ENCODE measurements at regions of chr22 and their contacts with region 1.

Region 1: DNA sequence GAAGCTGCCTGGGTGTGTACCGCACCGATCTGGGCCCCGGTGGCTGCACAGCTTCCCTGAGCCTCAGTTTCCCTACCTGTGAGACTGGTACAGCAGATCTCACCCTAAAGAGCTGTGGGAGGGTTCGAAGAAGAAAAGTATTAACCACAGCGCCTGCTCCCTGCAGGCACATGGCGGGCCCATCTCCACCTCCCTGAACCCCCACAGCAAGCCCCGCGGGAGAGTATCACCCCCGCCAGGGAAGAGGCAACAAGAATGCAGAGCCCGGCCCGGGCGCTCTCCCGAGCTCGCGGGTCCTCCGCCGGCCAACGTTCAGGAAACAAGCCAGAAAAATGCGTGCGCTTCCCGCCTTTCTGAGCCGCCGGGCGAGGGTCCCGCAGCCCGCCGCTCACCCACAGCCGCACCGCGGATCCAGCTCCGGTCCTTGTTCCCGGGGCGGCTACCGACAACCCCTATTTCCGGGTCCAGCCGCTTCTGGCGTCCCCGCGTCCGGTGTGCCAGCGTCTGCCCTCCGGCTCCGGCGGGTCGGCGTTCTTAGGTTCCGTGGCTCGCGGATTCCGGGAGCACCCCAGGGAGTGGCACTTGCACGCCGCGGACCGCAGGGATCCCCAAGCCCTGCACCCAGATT is at the start of gene TOP3B:
- DNase-seq: peak; percentile 75
- H3K4me3 ChIP-seq: peak within 1 kb of the TSS; percentile 89 to 99 (median 95)
- H3K27ac ChIP-seq: peak within 1 kb of the TSS; percentile 75
- H3K4me1 ChIP-seq: peaks cover 9% of the 10 kb centered on the region
- H3K27me3 ChIP-seq: no peaks in the 10 kb centered on the region
- CTCF ChIP-seq: no peak
- total RNA-seq, gene TOP3B: 36.4 to 36.7 TPM

Region 2: DNA sequence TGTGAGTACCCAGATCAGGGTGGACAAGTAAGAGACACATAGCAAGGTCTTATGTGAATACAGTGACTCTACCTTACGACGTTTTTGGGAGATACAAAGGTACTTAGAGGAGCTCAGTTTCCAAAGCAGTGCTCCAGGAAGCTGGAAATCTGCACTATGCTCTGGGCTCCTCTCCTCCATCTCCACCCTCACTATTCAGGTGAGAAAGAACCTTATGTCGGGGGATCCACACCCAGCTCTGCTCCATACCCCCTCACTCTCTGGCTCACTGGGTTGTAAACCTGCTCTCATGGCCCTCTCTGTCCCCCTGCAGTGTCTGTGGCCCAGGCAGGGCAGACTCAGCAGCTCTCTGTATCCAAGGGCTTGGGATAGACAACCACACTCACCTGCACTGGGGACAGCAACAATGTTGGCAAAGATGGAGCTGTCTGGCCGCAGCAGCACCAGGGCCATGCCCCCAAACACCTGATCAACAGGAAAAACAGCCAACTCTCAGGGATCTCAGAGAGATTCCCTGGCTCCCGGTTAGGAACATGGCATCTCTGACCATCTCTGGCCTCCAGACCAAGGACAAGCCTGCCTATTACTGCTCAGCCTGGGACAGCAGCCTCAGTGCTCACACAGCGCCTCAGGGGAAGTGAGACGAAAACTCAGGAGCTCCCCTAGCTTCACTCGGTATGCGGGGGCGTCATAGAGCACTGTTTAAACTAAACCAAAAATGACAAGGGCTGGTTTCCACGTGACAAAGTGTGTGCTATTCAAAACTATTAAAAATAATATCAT is 61.0 kb after region 1 on chr22:
- CTCF ChIA-PET with region 1: no interaction called
- dilution Hi-C with region 1: no loop called
- in situ Hi-C with region 1: no loop called
- intact Hi-C with region 1: loop called (anchors 10 kb)
- DNase-seq: no peak
- H3K4me3 ChIP-seq: no peak overlapping the region
- H3K27ac ChIP-seq: no peak overlapping the region
- H3K4me1 ChIP-seq: no peaks in the 10 kb centered on the region
- H3K27me3 ChIP-seq: no peaks in the 10 kb centered on the region
- CTCF ChIP-seq: no peak